Naive thymus-derived CD4-positive, alpha-beta T cell (primary cell): ENCODE measurements at regions of chr7 and their contacts with region 1.

Region 1: GRCh38 chr7:100148559-100149350 is at the start of gene LAMTOR4:
- DNase-seq: peak; percentile 84 to 99 (median 97)
- ATAC-seq: peak; percentile 98
- H3K4me3 ChIP-seq: peak within 1 kb of the TSS; percentile 97
- H3K4me3 Mint-ChIP-seq: peak within 1 kb of the TSS; percentile 87 to 100 (median 96)
- H3K27ac ChIP-seq: peak within 1 kb of the TSS; percentile 98
- H3K27ac Mint-ChIP-seq: peak within 1 kb of the TSS; percentile 95 to 99 (median 98)
- H3K4me1 ChIP-seq: peaks cover 15 to 19% of the 10 kb centered on the region in 2 donors
- H3K4me1 Mint-ChIP-seq: peaks cover 27 to 45% (median 38%) of the 10 kb centered on the region in 7 donors
- H3K27me3 ChIP-seq: no peaks in the 10 kb centered on the region
- H3K27me3 Mint-ChIP-seq: no peaks in the 10 kb centered on the region
- total RNA-seq, gene LAMTOR4: 132 to 200 (median 173) TPM

Region 2: GRCh38 chr7:100044701-100045100 is 104.1 kb before region 1 on chr7:
- CTCF ChIA-PET with region 1: no interaction called
- POLR2A ChIA-PET with region 1: no interaction called
- intact Hi-C with region 1: no loop called
- DNase-seq: no peak
- ATAC-seq: peak; percentile 45
- H3K4me3 ChIP-seq: no peak overlapping the region
- H3K4me3 Mint-ChIP-seq: peak overlapping the region in 3 of 10 donors; percentile 17 to 48 (median 42)
- H3K27ac ChIP-seq: no peak overlapping the region
- H3K27ac Mint-ChIP-seq: peak overlapping the region in 1 of 9 donors; percentile 42
- H3K4me1 ChIP-seq: peaks cover 6% of the 10 kb centered on the region in 2 donors
- H3K4me1 Mint-ChIP-seq: peaks cover 9 to 36% (median 26%) of the 10 kb centered on the region in 7 donors
- H3K27me3 ChIP-seq: no peaks in the 10 kb centered on the region
- H3K27me3 Mint-ChIP-seq: peaks cover 0 to 3% (median 0%) of the 10 kb centered on the region in 5 donors

Region 3: GRCh38 chr7:100126931-100127865 is 21.6 kb before region 1 on chr7 and contains the start of gene MBLAC1:
- CTCF ChIA-PET with region 1: interaction called, 26 read pairs
- POLR2A ChIA-PET with region 1: interaction called, 16 read pairs
- intact Hi-C with region 1: loop called (anchors 1 to 2 kb)
- DNase-seq: peak; percentile 80 to 95 (median 91)
- ATAC-seq: peak; percentile 95
- H3K4me3 ChIP-seq: peak within 1 kb of the TSS; percentile 99
- H3K4me3 Mint-ChIP-seq: peak within 1 kb of the TSS; percentile 95 to 100 (median 98)
- H3K27ac ChIP-seq: peak within 1 kb of the TSS; percentile 98
- H3K27ac Mint-ChIP-seq: peak within 1 kb of the TSS; percentile 98 to 100 (median 99)
- H3K4me1 ChIP-seq: peaks cover 20 to 25% of the 10 kb centered on the region in 2 donors
- H3K4me1 Mint-ChIP-seq: peaks cover 13 to 46% (median 26%) of the 10 kb centered on the region in 7 donors
- H3K27me3 ChIP-seq: no peaks in the 10 kb centered on the region
- H3K27me3 Mint-ChIP-seq: no peaks in the 10 kb centered on the region
- total RNA-seq, gene MBLAC1: 4.5 to 6.3 (median 5.8) TPM

Region 4: DNA sequence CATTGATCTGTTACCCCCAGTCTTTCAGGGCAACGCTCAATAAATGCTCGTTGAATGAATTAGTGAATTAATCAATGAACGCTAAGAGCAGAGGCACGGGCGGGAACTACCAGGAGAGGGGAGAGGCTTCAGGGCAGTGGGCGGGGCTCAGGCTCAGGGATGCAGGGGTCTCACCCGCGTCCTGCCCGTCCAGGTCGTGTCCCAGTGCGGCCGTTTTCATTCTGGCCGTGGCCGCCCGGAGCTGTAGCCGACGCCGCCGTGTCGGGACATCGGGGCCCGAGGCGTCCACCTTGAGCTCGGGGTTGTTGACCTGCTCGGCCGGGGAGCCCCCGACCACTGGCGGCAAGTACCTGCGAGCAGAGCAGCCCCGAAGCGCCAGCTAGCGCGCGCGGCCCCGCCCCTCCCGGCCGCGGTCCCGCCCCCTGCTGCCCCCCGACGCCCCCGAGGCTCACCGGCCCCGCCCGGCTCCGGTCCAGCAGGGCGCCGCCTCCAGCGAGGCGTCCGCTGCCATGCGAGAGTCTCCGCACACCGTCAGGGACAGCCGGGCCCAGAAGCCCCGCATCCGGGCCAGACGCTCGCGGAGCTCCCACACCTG is 22.4 kb after region 1 on chr7:
- CTCF ChIA-PET with region 1: interaction called, 3 read pairs
- POLR2A ChIA-PET with region 1: interaction called, 383 read pairs
- intact Hi-C with region 1: loop called (anchors 2 kb)
- DNase-seq: peak in 3 of 9 donors; percentile 23 to 38 (median 25)
- ATAC-seq: peak; percentile 40
- H3K4me3 ChIP-seq: peak overlapping the region; percentile 56
- H3K4me3 Mint-ChIP-seq: peak overlapping the region; percentile 65 to 95 (median 90)
- H3K27ac ChIP-seq: peak overlapping the region; percentile 81
- H3K27ac Mint-ChIP-seq: peak overlapping the region in 8 of 9 donors; percentile 86 to 99 (median 95)
- H3K4me1 ChIP-seq: peaks cover 21 to 52% of the 10 kb centered on the region in 2 donors
- H3K4me1 Mint-ChIP-seq: peaks cover 51 to 78% (median 66%) of the 10 kb centered on the region in 7 donors
- H3K27me3 ChIP-seq: no peaks in the 10 kb centered on the region
- H3K27me3 Mint-ChIP-seq: peaks cover 0 to 27% (median 5%) of the 10 kb centered on the region in 5 donors

Region 5: GRCh38 chr7:100208911-100209408 is 60.2 kb after region 1 on chr7:
- CTCF ChIA-PET with region 1: interaction called, 4 read pairs
- POLR2A ChIA-PET with region 1: no interaction called
- intact Hi-C with region 1: loop called in 1 of 2 experiments (anchors 5 kb)
- DNase-seq: peak in 6 of 9 donors; percentile 29 to 38 (median 34)
- ATAC-seq: peak; percentile 54
- H3K4me3 ChIP-seq: peak overlapping the region; percentile 45
- H3K4me3 Mint-ChIP-seq: peak overlapping the region; percentile 46 to 77 (median 74)
- H3K27ac ChIP-seq: peak overlapping the region; percentile 49
- H3K27ac Mint-ChIP-seq: peak overlapping the region; percentile 66 to 98 (median 87)
- H3K4me1 ChIP-seq: peaks cover 44 to 45% of the 10 kb centered on the region in 2 donors
- H3K4me1 Mint-ChIP-seq: peaks cover 39 to 56% (median 54%) of the 10 kb centered on the region in 7 donors
- H3K27me3 ChIP-seq: no peaks in the 10 kb centered on the region
- H3K27me3 Mint-ChIP-seq: no peaks in the 10 kb centered on the region